PC-3 (cell line): ENCODE measurements at regions of chr19 and their contacts with region 1.

Region 1: GRCh38 chr19:6297202-6297601 is 17.4 kb upstream of the MLLT1 start:
- DNase-seq: no peak
- ATAC-seq: no peak
- H3K4me3 ChIP-seq: no peak overlapping the region
- H3K27ac ChIP-seq: no peak overlapping the region
- H3K4me1 ChIP-seq: no peaks in the 10 kb centered on the region
- H3K27me3 ChIP-seq: no peaks in the 10 kb centered on the region
- CTCF ChIP-seq: no peak

Region 2: GRCh38 chr19:6167115-6167514 is 130.1 kb before region 1 on chr19:
- CTCF ChIA-PET with region 1: no interaction called
- POLR2A ChIA-PET with region 1: no interaction called
- intact Hi-C with region 1: loop called (anchors 2 kb)
- DNase-seq: no peak
- ATAC-seq: no peak
- H3K4me3 ChIP-seq: no peak overlapping the region
- H3K27ac ChIP-seq: no peak overlapping the region
- H3K4me1 ChIP-seq: no peaks in the 10 kb centered on the region
- H3K27me3 ChIP-seq: peaks cover 3% of the 10 kb centered on the region; the same call in 1 of the 2 replicates
- CTCF ChIP-seq: no peak

Region 3: DNA sequence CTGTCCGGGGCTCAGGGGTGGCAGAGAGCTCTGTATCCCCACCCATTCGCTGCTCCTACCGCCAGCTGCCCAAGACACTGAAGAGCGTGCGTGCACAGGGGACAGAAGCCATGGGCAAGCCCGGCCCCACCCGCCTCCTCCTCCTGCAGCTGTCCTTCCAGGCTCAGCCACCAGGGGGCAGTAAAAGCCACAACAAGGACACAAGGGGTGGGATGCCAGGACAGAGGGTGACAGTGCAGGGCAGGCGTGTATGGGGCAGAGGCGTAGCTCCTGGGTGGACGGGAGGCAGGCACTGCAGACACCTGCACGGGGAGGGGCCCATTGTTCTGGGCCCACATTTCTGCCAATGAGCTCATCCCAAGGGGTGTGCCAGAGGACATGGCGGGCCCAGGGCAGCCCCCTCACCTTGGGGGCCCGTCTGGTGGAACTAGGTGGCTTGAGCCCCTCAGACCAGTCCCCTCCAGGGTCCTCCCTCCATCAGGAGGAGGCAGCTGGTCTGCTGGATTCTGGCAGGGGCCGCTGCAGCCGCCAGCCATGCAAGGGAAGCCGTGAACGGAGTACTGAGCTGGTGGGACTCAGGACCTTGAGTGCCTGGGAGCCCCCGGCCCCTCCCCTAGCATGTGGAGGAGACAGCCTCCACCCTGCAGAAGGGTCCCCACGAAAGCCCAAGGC is 78.6 kb before region 1 on chr19:
- CTCF ChIA-PET with region 1: no interaction called
- POLR2A ChIA-PET with region 1: no interaction called
- intact Hi-C with region 1: loop called (anchors 2 kb)
- DNase-seq: peak; percentile 92
- ATAC-seq: peak; percentile 85
- H3K4me3 ChIP-seq: no peak overlapping the region
- H3K27ac ChIP-seq: no peak overlapping the region
- H3K4me1 ChIP-seq: no peaks in the 10 kb centered on the region; the same call in 1 of the 2 replicates
- H3K27me3 ChIP-seq: no peaks in the 10 kb centered on the region
- CTCF ChIP-seq: peak; percentile 96

Region 4: DNA sequence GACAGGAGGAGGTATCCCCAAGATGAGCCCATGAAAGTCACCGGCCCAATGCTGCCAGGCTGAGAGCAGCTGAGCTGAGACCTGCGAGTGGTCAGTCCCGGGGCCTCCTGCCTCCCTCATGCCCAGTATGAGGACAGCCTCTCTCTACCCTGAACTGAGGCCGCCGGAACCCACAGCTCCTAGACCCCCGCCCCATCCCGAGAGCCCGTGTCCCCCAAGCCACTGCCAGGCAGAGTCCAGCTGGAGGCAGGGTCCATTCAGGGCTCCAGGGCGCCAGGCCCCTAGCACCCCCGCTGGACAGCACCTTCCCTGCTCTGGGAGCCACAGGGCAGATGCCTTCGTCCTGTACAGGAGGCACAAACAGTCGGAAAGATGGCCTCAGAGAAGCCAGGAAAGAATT is 56.1 kb before region 1 on chr19:
- CTCF ChIA-PET with region 1: no interaction called
- POLR2A ChIA-PET with region 1: no interaction called
- intact Hi-C with region 1: no loop called
- DNase-seq: no peak
- ATAC-seq: no peak
- H3K4me3 ChIP-seq: no peak overlapping the region
- H3K27ac ChIP-seq: no peak overlapping the region
- H3K4me1 ChIP-seq: peaks cover 28% of the 10 kb centered on the region
- H3K27me3 ChIP-seq: no peaks in the 10 kb centered on the region
- CTCF ChIP-seq: no peak